Common myeloid progenitor, CD34-positive (primary cell): ENCODE measurements at regions of chr3 and their contacts with region 1.

Region 1: DNA sequence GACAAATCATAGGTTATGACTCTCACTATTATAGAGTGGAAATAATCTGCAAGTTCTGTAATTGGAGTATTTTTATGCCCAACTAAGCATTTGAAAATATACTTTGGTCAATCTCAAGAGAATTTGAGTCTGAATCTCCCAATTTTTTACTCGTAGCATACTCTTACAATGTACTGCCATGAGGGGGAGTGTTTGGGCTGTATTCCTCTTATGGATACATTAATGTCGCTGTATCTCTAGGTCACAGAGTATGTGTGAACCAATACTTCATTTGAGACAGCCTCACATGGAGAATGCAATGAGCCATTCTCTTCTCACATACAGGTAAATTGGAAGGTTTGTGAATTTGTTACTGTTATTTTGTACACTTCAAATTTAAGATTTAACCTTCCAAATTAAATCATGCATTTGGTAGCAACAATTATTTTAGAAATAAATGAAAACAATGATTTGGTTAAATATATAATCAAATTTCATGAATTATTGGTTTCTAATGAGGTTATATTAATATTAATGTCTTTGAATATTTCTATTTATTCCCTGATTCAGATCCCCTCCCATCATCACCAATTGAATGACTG is 5.5 kb upstream of the CD200 start:
- DNase-seq: peak; percentile 72 to 88 (median 85)
- H3K4me3 ChIP-seq: no peak overlapping the region
- H3K27ac ChIP-seq: no peak overlapping the region
- H3K4me1 ChIP-seq: peaks cover 0 to 1% (median 0%) of the 10 kb centered on the region in 4 experiments
- H3K27me3 ChIP-seq: no peaks in the 10 kb centered on the region

Region 2: GRCh38 chr3:112303764-112304325 is 23.6 kb before region 1 on chr3:
- CTCF ChIA-PET with region 1: interaction called, 10 read pairs
- POLR2A ChIA-PET with region 1: no interaction called
- DNase-seq: peak; percentile 39 to 85 (median 75)
- H3K4me3 ChIP-seq: peak overlapping the region in 5 of 7 experiments; percentile 52 to 80 (median 76)
- H3K27ac ChIP-seq: no peak overlapping the region
- H3K4me1 ChIP-seq: peaks cover 9 to 21% (median 14%) of the 10 kb centered on the region in 4 experiments
- H3K27me3 ChIP-seq: no peaks in the 10 kb centered on the region

Region 3: GRCh38 chr3:112341381-112341780 is 13.9 kb after region 1 on chr3:
- CTCF ChIA-PET with region 1: no interaction called
- POLR2A ChIA-PET with region 1: no interaction called
- DNase-seq: no peak
- H3K4me3 ChIP-seq: no peak overlapping the region
- H3K27ac ChIP-seq: no peak overlapping the region
- H3K4me1 ChIP-seq: peaks cover 0 to 30% (median 13%) of the 10 kb centered on the region in 4 experiments
- H3K27me3 ChIP-seq: no peaks in the 10 kb centered on the region

Region 4: DNA sequence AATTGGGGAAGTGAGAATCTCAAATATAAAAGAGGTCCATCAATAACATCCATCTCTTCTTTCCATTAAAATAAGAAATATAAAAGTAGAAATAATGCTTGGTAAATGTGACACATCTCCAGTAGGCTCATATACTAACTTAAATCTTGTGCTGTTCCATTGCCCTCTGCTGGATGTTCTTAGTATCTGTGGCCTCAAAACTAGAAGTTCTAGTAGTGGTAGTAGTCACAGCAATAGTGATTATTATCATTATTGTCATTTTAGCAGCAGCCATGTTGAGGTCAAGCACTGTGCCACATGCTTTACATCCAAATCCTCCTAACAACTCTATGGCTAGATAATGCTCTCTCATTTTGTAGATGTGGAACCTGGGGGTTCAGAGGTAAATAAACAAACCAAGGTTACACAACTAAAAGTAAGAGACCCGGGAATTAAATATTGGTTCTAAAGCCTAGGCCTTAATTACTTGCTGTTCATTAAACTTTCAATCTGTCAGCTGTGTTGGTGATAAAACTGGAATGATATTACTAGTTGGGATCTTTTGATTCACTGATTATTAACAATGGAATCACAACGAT is 192.1 kb after region 1 on chr3:
- CTCF ChIA-PET with region 1: interaction called, 33 read pairs
- POLR2A ChIA-PET with region 1: interaction called, 3 read pairs
- DNase-seq: peak; percentile 82 to 89 (median 87)
- H3K4me3 ChIP-seq: no peak overlapping the region
- H3K27ac ChIP-seq: no peak overlapping the region
- H3K4me1 ChIP-seq: peaks cover 4 to 15% (median 5%) of the 10 kb centered on the region in 4 experiments
- H3K27me3 ChIP-seq: no peaks in the 10 kb centered on the region